ENCODE measurements at regions of chr6 and their contacts with region 1.

Region 1: DNA sequence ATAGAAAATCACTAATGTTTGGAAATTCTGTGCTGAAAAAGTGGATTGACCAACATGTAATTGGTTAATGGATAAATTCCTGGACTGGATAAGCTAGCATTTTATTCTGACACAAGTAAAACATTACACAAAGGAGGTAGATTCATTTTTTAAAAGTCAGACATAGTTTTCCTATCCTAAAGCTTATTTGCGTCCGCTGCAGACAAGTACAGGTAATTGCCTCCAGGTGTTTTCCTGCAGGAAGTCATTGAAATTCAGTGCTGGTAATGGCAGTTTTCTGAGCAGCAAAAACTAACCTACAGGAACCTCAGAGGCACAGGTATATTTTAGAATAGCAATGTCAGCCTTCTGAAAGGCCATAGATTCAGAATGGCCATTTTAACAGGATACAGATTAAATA is 20.0 kb upstream of the HIVEP1 start:
- DNase-seq: no peak
- ATAC-seq: no peak
- H3K4me3 Mint-ChIP-seq: no peak overlapping the region
- H3K27ac Mint-ChIP-seq: no peak overlapping the region
- H3K4me1 Mint-ChIP-seq: peaks cover 10% of the 10 kb centered on the region
- H3K27me3 Mint-ChIP-seq: no peaks in the 10 kb centered on the region

Region 2: DNA sequence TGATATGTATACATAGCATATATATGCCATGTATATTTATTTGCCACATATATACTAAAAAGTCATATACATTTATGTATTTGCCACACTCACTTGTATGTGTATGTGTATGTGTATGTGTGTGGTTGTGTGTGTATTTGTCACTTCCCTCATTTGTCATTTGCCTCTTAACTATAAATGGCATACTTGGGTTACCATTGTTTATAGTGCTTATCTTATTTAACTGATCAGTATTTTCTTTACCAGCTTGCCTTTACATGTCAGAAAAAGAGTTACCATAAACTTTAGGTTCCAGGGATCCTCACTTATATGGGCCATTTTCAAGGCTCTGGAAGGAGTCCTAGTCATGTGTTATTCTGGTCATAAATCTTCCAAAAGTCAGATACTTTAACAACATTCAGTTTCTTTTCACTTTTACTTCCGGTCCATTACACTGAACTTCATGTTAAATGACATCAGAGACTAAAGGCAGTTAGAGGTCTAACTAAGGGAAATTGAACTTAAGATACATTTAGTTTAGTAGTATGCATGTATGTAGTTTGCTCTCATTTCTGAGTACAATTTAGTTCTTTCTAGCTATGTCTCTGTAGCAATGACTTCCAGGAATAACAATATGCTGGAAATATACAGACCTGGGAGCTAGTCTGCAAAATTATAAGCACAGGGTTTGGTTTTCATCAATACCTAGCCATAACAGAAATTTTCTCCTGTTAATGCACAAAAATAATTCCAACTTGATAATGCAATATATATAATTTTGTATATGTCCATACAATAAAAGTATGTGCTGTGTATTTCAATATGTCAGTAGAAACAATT is 13.7 kb before region 1 on chr6:
- CTCF ChIA-PET with region 1: interaction called, 10 read pairs
- POLR2A ChIA-PET with region 1: no interaction called
- intact Hi-C with region 1: no loop called
- DNase-seq: no peak
- ATAC-seq: peak; percentile 47
- H3K4me3 Mint-ChIP-seq: no peak overlapping the region
- H3K27ac Mint-ChIP-seq: peak overlapping the region; percentile 14
- H3K4me1 Mint-ChIP-seq: peaks cover 20% of the 10 kb centered on the region
- H3K27me3 Mint-ChIP-seq: no peaks in the 10 kb centered on the region

Region 3: GRCh38 chr6:12012558-12013306 is 20.6 kb after region 1 on chr6:
- CTCF ChIA-PET with region 1: no interaction called
- POLR2A ChIA-PET with region 1: no interaction called
- intact Hi-C with region 1: no loop called
- DNase-seq: peak; percentile 90
- ATAC-seq: peak; percentile 36
- H3K4me3 Mint-ChIP-seq: peak overlapping the region; percentile 96
- H3K27ac Mint-ChIP-seq: peak overlapping the region; percentile 96
- H3K4me1 Mint-ChIP-seq: peaks cover 44% of the 10 kb centered on the region
- H3K27me3 Mint-ChIP-seq: no peaks in the 10 kb centered on the region

Region 4: GRCh38 chr6:12174878-12175277 is 182.8 kb after region 1 on chr6:
- CTCF ChIA-PET with region 1: no interaction called
- POLR2A ChIA-PET with region 1: no interaction called
- intact Hi-C with region 1: no loop called
- DNase-seq: no peak
- ATAC-seq: no peak
- H3K4me3 Mint-ChIP-seq: no peak overlapping the region
- H3K27ac Mint-ChIP-seq: no peak overlapping the region
- H3K4me1 Mint-ChIP-seq: no peaks in the 10 kb centered on the region
- H3K27me3 Mint-ChIP-seq: no peaks in the 10 kb centered on the region